Colonic mucosa (tissue), 4 donors: ENCODE measurements at regions of chr19 and their contacts with region 1.

Region 1: DNA sequence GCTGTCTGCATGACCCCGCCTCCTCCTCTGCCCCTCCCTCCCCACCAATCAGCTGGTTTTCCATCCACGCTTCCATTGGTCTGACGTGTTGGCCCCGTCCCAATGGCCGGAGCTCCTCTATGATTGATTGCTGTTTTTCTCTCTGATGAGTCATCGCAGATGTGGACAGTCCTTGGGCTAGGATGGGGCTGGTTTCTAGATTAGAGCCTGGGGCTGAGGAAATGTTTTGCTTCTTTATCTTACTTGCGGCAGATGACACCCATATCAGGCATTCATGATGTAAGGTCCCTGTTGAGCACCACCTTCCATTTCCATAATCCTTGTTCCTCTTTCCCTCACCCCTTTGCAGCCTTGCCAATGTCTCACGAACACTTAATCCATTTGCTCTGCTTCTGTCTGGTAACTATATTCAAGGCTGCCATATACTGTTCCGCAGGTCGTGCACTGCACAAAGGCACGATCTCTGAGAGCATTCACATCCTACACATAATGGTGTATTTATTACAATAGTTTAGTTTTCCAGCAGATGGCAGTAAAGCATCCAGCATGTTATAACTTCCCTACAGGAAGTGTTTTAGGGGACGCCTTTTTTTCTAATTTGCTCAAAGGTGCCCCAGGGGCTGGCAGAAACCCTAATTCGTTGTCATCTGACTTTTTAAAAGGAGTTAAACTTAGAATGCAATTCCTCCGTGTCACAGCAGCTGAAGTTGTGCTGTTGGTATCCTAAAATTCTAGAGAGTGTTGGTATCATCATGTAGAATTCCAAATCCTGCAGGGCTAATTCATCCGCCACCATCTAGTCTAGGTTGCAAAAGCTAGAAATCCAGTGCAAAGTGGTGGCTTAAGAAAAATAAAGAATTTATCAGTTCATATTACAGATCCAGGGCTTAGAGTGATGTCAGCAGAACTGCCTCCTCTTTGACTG is 73.5 kb downstream of the MAP4K1 start:
- DNase-seq: peak; percentile 40
- H3K4me3 ChIP-seq: no peak overlapping the region
- H3K27ac ChIP-seq: no peak overlapping the region
- H3K4me1 ChIP-seq: no peaks in the 10 kb centered on the region
- H3K27me3 ChIP-seq: no peaks in the 10 kb centered on the region
- CTCF ChIP-seq: peak; percentile 54

Region 2: GRCh38 chr19:38470788-38471480 is 73.4 kb before region 1 on chr19:
- intact Hi-C with region 1: no loop called
- DNase-seq: no peak
- H3K4me3 ChIP-seq: no peak overlapping the region
- H3K27ac ChIP-seq: no peak overlapping the region
- H3K4me1 ChIP-seq: no peaks in the 10 kb centered on the region
- H3K27me3 ChIP-seq: no peaks in the 10 kb centered on the region
- CTCF ChIP-seq: no peak

Region 3: GRCh38 chr19:38606131-38606530 is 61.8 kb after region 1 on chr19:
- intact Hi-C with region 1: no loop called
- DNase-seq: no peak
- H3K4me3 ChIP-seq: no peak overlapping the region
- H3K27ac ChIP-seq: no peak overlapping the region
- H3K4me1 ChIP-seq: no peaks in the 10 kb centered on the region
- H3K27me3 ChIP-seq: no peaks in the 10 kb centered on the region
- CTCF ChIP-seq: no peak

Region 4: GRCh38 chr19:38618590-38619360 is 74.5 kb after region 1 on chr19 and contains the start of gene EIF3K:
- intact Hi-C with region 1: loop called (anchors 10 kb)
- DNase-seq: peak; percentile 100
- H3K4me3 ChIP-seq: peak within 1 kb of the TSS; percentile 97
- H3K27ac ChIP-seq: peak within 1 kb of the TSS; percentile 78
- H3K4me1 ChIP-seq: peaks cover 7% of the 10 kb centered on the region
- H3K27me3 ChIP-seq: no peaks in the 10 kb centered on the region
- CTCF ChIP-seq: no peak
- total RNA-seq, gene EIF3K: 367 to 445 TPM

Region 5: DNA sequence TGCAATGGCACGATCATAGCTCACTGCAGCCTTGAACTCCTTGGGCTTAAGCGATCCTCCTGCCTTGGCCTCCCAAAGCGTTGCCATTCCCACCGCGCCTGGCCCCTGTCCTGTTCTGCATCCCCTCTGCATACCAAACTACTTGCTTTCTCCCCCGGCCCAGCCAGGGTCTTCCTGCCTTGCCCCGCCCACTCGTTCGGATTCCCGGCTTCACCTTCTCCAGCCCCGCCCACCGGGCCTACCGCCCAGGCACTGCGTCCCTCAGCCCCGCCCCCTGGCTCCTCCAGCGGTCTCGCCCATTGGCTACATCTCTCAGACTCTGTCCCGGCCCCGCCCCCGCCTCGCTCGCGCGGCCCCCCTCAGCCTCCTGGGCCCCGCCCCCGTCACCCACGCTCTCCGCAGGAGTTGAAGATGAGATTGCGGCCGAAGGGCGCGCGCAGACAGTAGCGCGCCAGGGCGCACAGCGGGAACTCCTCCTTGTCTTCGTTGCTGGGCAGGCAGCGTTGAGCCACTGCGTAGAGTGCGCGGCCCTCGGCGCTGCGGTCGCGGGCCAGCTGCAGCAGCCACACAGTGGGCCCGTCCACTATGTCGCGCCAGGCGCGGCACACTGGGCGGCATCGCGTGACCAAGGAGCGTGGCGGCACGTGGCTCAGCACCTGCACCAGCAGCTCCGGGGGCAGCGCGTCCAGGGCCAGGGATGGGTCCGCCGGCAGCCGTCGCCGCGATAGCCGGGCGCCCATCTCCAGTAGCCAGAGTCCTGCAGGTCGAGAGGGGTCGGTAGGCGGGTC is 405.5 kb after region 1 on chr19:
- intact Hi-C with region 1: loop called (anchors 10 kb)
- DNase-seq: peak; percentile 85
- H3K4me3 ChIP-seq: peak overlapping the region; percentile 36
- H3K27ac ChIP-seq: no peak overlapping the region
- H3K4me1 ChIP-seq: peaks cover 6% of the 10 kb centered on the region
- H3K27me3 ChIP-seq: no peaks in the 10 kb centered on the region
- CTCF ChIP-seq: no peak